B cell (primary cell): ENCODE measurements at regions of chr13 and their contacts with region 1.

Region 1: DNA sequence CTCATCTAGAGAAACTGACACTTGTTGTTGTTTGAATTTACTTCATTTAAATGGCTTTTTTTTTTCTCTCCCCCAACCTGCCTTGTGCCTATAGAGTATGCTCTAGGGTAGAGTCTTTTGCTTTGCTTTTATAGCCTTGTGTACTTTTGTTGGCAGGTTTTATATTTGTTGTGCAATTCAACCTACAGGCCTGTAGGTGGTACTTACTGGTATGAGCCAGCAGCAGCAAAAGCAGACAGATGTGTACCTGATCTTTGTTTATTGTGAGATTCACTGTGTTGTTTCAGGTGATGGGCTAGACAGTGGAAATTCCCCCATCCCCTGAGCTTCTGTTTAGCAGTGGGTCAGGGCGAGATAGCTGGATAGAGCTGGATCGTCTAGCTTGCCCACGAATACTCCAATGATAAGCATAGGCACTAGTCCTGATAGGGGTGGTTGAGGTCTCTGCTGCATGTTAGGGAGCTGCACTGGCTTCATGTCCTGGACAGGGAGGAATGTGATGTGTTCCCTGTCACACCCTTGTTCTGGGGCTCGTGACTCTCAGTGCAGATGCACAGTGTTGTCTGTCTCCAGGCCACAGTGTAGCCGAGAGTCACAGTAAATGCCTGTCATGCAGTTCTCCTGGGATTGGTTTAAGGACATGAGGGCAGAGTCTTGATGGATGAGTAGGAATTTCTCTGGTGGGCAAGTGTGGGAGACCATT is 21.3 kb downstream of the DNAJC3 start:
- DNase-seq: no peak
- ATAC-seq: no peak
- H3K4me3 ChIP-seq: no peak overlapping the region
- H3K4me3 Mint-ChIP-seq: no peak overlapping the region
- H3K27ac ChIP-seq: no peak overlapping the region
- H3K27ac Mint-ChIP-seq: no peak overlapping the region
- H3K4me1 ChIP-seq: peaks cover 0 to 2% of the 10 kb centered on the region in 2 donors
- H3K4me1 Mint-ChIP-seq: peaks cover 34% of the 10 kb centered on the region
- H3K27me3 ChIP-seq: no peaks in the 10 kb centered on the region
- H3K27me3 Mint-ChIP-seq: no peaks in the 10 kb centered on the region
- CTCF ChIP-seq: no peak

Region 2: DNA sequence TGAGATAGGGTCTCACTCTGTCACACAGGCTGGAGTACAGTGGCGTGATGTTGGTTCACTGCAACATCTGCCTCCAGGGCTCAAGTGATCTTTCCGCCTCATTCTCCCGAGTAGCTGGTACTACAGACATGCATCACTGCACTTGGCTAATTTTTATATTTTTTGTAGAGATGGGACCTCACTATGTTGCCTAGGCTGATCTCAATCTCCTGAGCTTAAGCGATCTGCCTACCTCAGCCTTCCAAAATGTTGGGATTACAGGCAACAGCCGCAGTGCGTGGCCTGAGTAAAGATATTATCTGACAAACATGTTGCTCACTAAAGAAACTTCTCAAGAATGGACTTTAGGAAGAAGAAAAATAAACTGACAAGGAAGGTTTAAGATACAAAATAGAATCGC is 271.6 kb before region 1 on chr13:
- CTCF ChIA-PET with region 1: no interaction called
- POLR2A ChIA-PET with region 1: no interaction called
- intact Hi-C with region 1: no loop called
- DNase-seq: no peak
- ATAC-seq: no peak
- H3K4me3 ChIP-seq: no peak overlapping the region
- H3K4me3 Mint-ChIP-seq: no peak overlapping the region
- H3K27ac ChIP-seq: no peak overlapping the region
- H3K27ac Mint-ChIP-seq: no peak overlapping the region
- H3K4me1 ChIP-seq: no peaks in the 10 kb centered on the region
- H3K4me1 Mint-ChIP-seq: no peaks in the 10 kb centered on the region
- H3K27me3 ChIP-seq: no peaks in the 10 kb centered on the region
- H3K27me3 Mint-ChIP-seq: peaks cover 11% of the 10 kb centered on the region
- CTCF ChIP-seq: no peak

Region 3: DNA sequence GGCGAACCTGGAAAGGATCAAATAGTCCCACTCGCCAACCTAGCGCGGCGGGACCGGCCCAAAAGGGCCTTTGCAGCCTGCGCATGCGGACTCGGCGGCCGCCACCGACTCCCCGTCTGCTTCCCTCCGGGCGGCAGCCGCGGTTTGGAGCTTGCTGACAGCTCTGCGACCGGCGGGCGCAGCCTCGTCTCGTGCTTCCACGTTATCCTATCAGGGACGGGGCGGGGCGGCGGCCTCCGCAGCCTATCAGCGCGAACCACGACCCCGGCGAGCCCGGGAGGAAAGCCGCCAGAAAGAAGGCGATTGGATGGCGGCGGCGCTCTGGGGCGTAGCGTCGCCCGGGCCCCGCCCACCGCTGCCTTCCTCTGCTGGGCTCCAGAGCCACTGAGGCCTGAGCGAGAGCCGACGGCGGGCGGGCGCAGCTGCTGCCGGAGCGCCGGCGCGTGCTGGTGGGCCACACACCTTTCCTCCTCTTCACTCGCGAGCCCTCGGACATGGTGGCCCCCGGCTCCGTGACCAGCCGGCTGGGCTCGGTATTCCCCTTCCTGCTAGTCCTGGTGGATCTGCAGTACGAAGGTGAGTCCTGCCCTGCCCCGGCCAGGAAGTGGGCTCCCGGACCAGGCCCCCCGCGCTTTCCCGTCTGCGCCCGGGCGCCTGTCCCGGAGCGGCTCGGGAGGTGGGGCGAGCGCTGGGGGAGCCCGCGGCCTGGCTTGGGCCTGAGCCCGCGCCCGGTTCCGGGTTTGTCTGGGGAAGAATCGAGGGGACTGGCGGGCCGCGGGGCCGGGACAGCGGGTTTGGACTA is 21.2 kb before region 1 on chr13 and contains the start of gene DNAJC3:
- CTCF ChIA-PET with region 1: no interaction called
- POLR2A ChIA-PET with region 1: interaction called, 10 read pairs
- intact Hi-C with region 1: no loop called
- DNase-seq: peak; percentile 99
- ATAC-seq: peak; percentile 95
- H3K4me3 ChIP-seq: peak within 1 kb of the TSS; percentile 72 to 98 (median 89)
- H3K4me3 Mint-ChIP-seq: peak within 1 kb of the TSS; percentile 95
- H3K27ac ChIP-seq: peak within 1 kb of the TSS; percentile 79 to 91
- H3K27ac Mint-ChIP-seq: peak within 1 kb of the TSS; percentile 94
- H3K4me1 ChIP-seq: peaks cover 22 to 27% of the 10 kb centered on the region in 2 donors
- H3K4me1 Mint-ChIP-seq: peaks cover 48% of the 10 kb centered on the region
- H3K27me3 ChIP-seq: no peaks in the 10 kb centered on the region
- H3K27me3 Mint-ChIP-seq: no peaks in the 10 kb centered on the region
- CTCF ChIP-seq: no peak
- total RNA-seq, gene DNAJC3: 12.1 and 13.0 TPM in 2 replicates

Region 4: DNA sequence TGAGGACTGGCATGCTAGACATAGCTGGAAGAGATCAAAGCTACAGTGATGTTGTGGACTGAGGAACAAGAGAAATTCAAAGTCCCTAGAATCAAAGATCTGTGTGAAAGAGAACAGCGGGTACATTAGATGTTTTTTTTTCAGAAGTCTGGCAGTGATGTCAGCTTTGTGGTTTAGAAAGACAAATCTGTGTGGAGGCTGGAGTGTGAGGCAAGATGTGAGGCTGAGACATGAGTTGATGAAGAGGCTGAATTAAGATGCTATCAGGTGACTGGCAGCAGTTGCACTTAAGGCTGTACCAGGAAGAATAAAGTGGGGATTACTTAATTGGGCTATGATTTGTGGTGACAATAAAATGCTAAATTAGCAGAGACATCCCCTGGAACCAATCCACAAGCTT is 25.2 kb after region 1 on chr13:
- CTCF ChIA-PET with region 1: no interaction called
- POLR2A ChIA-PET with region 1: no interaction called
- intact Hi-C with region 1: no loop called
- DNase-seq: no peak
- ATAC-seq: no peak
- H3K4me3 ChIP-seq: no peak overlapping the region
- H3K4me3 Mint-ChIP-seq: no peak overlapping the region
- H3K27ac ChIP-seq: no peak overlapping the region
- H3K27ac Mint-ChIP-seq: no peak overlapping the region
- H3K4me1 ChIP-seq: no peaks in the 10 kb centered on the region
- H3K4me1 Mint-ChIP-seq: peaks cover 9% of the 10 kb centered on the region
- H3K27me3 ChIP-seq: no peaks in the 10 kb centered on the region
- H3K27me3 Mint-ChIP-seq: no peaks in the 10 kb centered on the region
- CTCF ChIP-seq: no peak

Region 5: GRCh38 chr13:95893861-95894260 is 195.7 kb after region 1 on chr13:
- CTCF ChIA-PET with region 1: no interaction called
- POLR2A ChIA-PET with region 1: no interaction called
- intact Hi-C with region 1: no loop called
- DNase-seq: no peak
- ATAC-seq: no peak
- H3K4me3 ChIP-seq: no peak overlapping the region
- H3K4me3 Mint-ChIP-seq: no peak overlapping the region
- H3K27ac ChIP-seq: no peak overlapping the region
- H3K27ac Mint-ChIP-seq: no peak overlapping the region
- H3K4me1 ChIP-seq: no peaks in the 10 kb centered on the region
- H3K4me1 Mint-ChIP-seq: no peaks in the 10 kb centered on the region
- H3K27me3 ChIP-seq: no peaks in the 10 kb centered on the region
- H3K27me3 Mint-ChIP-seq: no peaks in the 10 kb centered on the region
- CTCF ChIP-seq: no peak